MCF 10A (cell line): ENCODE measurements at regions of chr22 and their contacts with region 1.

Region 1: GRCh38 chr22:31253949-31254348 is 38.3 kb downstream of the PIK3IP1 start:
- DNase-seq: peak; percentile 97
- H3K4me3 Mint-ChIP-seq: peak overlapping the region; percentile 52
- H3K27ac Mint-ChIP-seq: peak overlapping the region; percentile 94
- H3K4me1 Mint-ChIP-seq: peaks cover 26% of the 10 kb centered on the region
- H3K27me3 Mint-ChIP-seq: no peaks in the 10 kb centered on the region
- CTCF ChIP-seq: no peak

Region 2: GRCh38 chr22:31160328-31160978 is 93.5 kb before region 1 on chr22:
- CTCF ChIA-PET with region 1: interaction called, 6 read pairs
- POLR2A ChIA-PET with region 1: interaction called, 74 read pairs
- intact Hi-C with region 1: loop called (anchors 2 kb)
- DNase-seq: no peak
- H3K4me3 Mint-ChIP-seq: peak overlapping the region; percentile 89
- H3K27ac Mint-ChIP-seq: peak overlapping the region; percentile 97
- H3K4me1 Mint-ChIP-seq: peaks cover 14% of the 10 kb centered on the region
- H3K27me3 Mint-ChIP-seq: no peaks in the 10 kb centered on the region
- CTCF ChIP-seq: no peak

Region 3: GRCh38 chr22:31278622-31279326 is 24.8 kb after region 1 on chr22:
- CTCF ChIA-PET with region 1: interaction called, 55 read pairs
- POLR2A ChIA-PET with region 1: interaction called, 188 read pairs
- intact Hi-C with region 1: no loop called
- DNase-seq: no peak
- H3K4me3 Mint-ChIP-seq: no peak overlapping the region
- H3K27ac Mint-ChIP-seq: no peak overlapping the region
- H3K4me1 Mint-ChIP-seq: peaks cover 11% of the 10 kb centered on the region
- H3K27me3 Mint-ChIP-seq: no peaks in the 10 kb centered on the region
- CTCF ChIP-seq: no peak

Region 4: GRCh38 chr22:31284281-31285155 is 30.6 kb after region 1 on chr22:
- CTCF ChIA-PET with region 1: interaction called, 3 read pairs
- POLR2A ChIA-PET with region 1: interaction called, 24 read pairs
- intact Hi-C with region 1: no loop called
- DNase-seq: no peak
- H3K4me3 Mint-ChIP-seq: no peak overlapping the region
- H3K27ac Mint-ChIP-seq: peak overlapping the region; percentile 49
- H3K4me1 Mint-ChIP-seq: peaks cover 9% of the 10 kb centered on the region
- H3K27me3 Mint-ChIP-seq: no peaks in the 10 kb centered on the region
- CTCF ChIP-seq: no peak

Region 5: DNA sequence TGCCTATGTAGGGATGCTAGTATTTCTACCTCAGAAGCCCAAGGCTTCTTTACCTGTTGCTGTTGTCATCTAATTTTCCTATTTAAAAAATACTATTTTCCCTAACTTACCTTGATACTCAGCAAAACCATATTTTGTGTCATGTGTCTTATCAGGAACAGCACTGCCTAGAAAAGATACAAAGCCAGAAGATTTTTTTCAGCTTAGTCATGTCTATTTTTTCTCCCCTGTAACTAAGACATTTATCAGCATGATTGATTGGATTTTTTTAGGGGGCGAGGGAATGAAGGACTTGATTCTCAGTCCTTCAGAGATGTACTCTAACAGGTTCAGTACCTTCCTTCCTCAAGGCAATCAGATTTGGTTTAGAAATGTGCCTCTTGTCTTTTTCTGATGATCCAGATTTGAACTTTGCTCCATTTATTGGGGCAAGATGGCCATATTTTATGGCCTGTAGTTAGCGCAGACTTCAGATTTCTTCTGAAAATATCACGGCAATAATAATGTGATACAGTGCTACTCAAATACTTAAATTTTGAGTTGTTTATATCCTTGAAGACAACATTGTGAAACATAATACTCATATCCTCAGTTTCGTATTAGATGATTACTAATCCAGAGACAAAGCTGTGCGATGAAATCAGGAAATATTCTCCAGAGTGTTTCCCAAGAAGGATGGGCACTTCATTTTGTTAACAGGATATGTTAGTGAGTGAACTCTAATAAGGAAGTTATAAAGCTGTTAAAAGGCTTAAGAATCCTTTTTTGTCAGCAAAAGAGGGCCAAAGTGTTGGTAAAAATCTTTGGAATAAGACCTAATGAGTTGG is 42.1 kb after region 1 on chr22:
- CTCF ChIA-PET with region 1: interaction called, 4 read pairs
- POLR2A ChIA-PET with region 1: interaction called, 62 read pairs
- intact Hi-C with region 1: no loop called
- DNase-seq: peak; percentile 56
- H3K4me3 Mint-ChIP-seq: no peak overlapping the region
- H3K27ac Mint-ChIP-seq: peak overlapping the region; percentile 80
- H3K4me1 Mint-ChIP-seq: peaks cover 24% of the 10 kb centered on the region
- H3K27me3 Mint-ChIP-seq: no peaks in the 10 kb centered on the region
- CTCF ChIP-seq: no peak

Region 6: GRCh38 chr22:31313366-31314147 is 59.6 kb after region 1 on chr22:
- CTCF ChIA-PET with region 1: interaction called, 13 read pairs
- POLR2A ChIA-PET with region 1: interaction called, 41 read pairs
- intact Hi-C with region 1: no loop called
- DNase-seq: peak; percentile 95
- H3K4me3 Mint-ChIP-seq: no peak overlapping the region
- H3K27ac Mint-ChIP-seq: peak overlapping the region; percentile 52
- H3K4me1 Mint-ChIP-seq: peaks cover 6% of the 10 kb centered on the region
- H3K27me3 Mint-ChIP-seq: no peaks in the 10 kb centered on the region
- CTCF ChIP-seq: peak; percentile 71